ENCODE measurements at regions of chr13 and their contacts with region 1.

Region 1: GRCh38 chr13:40126306-40127085 is 471.0 kb downstream of the COG6 start:
- DNase-seq: peak; percentile 97
- H3K4me3 ChIP-seq: peak overlapping the region; percentile 47
- H3K27ac ChIP-seq: peak overlapping the region; percentile 96
- H3K4me1 ChIP-seq: peaks cover 76% of the 10 kb centered on the region
- CTCF ChIP-seq: no peak

Region 2: GRCh38 chr13:40069173-40070044 is 57.1 kb before region 1 on chr13:
- CTCF ChIA-PET with region 1: no interaction called
- POLR2A ChIA-PET with region 1: no interaction called
- intact Hi-C with region 1: loop called (anchors 1 kb)
- DNase-seq: peak; percentile 81
- H3K4me3 ChIP-seq: no peak overlapping the region
- H3K27ac ChIP-seq: no peak overlapping the region
- H3K4me1 ChIP-seq: peaks cover 24% of the 10 kb centered on the region
- CTCF ChIP-seq: peak; percentile 98

Region 3: GRCh38 chr13:40206241-40207000 is 79.9 kb after region 1 on chr13:
- CTCF ChIA-PET with region 1: interaction called, 3 read pairs
- POLR2A ChIA-PET with region 1: interaction called, 3 read pairs
- intact Hi-C with region 1: loop called (anchors 1 kb)
- DNase-seq: peak; percentile 82
- H3K4me3 ChIP-seq: peak overlapping the region; percentile 30
- H3K27ac ChIP-seq: peak overlapping the region; percentile 91
- H3K4me1 ChIP-seq: peaks cover 51% of the 10 kb centered on the region
- CTCF ChIP-seq: no peak

Region 4: GRCh38 chr13:40445557-40445990 is 319.1 kb after region 1 on chr13:
- CTCF ChIA-PET with region 1: no interaction called
- POLR2A ChIA-PET with region 1: no interaction called
- intact Hi-C with region 1: loop called (anchors 1 kb)
- DNase-seq: peak; percentile 100
- H3K4me3 ChIP-seq: no peak overlapping the region
- H3K27ac ChIP-seq: peak overlapping the region; percentile 92
- H3K4me1 ChIP-seq: peaks cover 80% of the 10 kb centered on the region
- CTCF ChIP-seq: no peak

Region 5: DNA sequence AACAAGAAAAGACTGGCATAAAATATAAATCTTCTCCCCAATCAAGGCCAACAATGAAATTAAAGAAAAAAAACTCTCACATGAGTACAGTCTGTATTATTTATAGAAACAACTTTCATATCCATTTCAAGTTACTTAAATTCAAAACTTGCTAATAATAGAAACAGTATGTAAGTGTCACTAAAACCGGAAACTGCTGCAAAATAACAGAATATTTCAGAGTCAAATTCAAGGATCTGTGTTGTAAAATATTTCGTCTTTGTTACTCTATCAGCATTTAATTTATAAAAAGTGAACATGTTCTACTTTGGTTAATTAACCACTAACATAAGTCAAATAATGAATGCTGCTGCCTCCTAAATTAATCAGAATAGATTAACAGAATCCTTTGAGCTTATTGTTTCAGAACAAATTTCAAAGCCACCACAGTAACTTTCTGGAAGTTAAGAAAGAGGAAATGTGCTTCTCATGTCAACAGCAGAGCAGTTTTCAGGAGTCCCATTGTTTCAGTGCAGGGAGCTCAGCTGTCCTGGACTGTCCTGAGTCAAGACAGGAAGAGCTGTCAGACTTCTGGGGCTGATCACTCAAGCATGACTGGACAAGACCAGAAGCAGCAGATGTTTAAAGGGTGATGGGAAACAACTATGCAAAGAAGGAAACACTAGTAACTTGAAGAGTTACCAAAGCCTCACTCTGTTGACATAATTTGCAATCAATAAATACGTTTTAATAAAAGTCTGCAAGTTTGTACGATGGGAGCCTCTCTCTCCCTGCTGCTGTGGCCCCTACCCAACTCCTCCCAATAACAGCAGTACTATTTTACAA is 463.0 kb after region 1 on chr13:
- CTCF ChIA-PET with region 1: no interaction called
- POLR2A ChIA-PET with region 1: no interaction called
- intact Hi-C with region 1: loop called (anchors 1 kb)
- DNase-seq: peak; percentile 97
- H3K4me3 ChIP-seq: peak overlapping the region; percentile 63
- H3K27ac ChIP-seq: peak overlapping the region; percentile 92
- H3K4me1 ChIP-seq: peaks cover 97% of the 10 kb centered on the region
- CTCF ChIP-seq: no peak

Region 6: GRCh38 chr13:40777166-40777808 is 650.8 kb after region 1 on chr13:
- CTCF ChIA-PET with region 1: no interaction called
- POLR2A ChIA-PET with region 1: no interaction called
- intact Hi-C with region 1: loop called (anchors 1 kb)
- DNase-seq: peak; percentile 86
- H3K4me3 ChIP-seq: peak overlapping the region; percentile 48
- H3K27ac ChIP-seq: peak overlapping the region; percentile 59
- H3K4me1 ChIP-seq: peaks cover 51% of the 10 kb centered on the region
- CTCF ChIP-seq: peak; percentile 99